A549 (cell line): ENCODE measurements at regions of chr11 and their contacts with region 1.

Region 1: DNA sequence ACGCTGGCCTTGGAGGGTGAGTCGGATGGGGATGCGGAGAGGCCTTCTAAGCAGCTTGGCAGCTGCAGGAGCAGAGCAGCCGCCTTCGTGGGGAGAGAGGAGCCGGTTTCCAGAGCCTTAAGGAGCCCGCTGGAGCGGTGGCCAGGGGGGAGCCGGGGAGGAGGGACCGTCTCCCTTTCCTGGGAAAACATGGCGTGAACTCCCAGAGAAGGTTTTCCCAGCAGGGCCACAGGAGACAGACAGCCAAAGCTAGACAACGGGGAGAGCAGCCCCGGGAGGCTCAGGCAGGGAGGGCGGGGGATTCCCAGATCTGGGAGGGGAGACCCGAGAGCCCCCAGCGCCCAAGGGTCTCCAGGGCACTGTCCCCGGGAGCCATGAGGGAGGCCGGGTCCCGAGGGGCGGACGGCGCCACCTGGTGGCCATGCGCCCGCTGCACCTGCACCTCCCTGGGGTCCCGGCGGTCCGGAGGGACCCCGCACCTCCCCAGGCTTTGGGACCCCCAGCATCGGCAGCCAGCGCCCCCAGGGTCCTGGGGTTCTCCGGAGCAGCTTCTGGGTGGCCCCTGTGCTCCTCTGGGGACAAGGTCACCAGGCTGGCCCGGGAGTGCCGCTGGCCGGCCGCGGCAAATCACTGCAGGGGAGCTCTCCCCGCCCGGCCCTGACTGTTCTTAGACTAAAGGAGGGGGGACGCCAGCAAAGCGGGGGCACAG is 2.4 kb upstream of the SYT8 start:
- DNase-seq: peak; percentile 44 to 69
- ATAC-seq: peak; percentile 41 to 83; a peak in 3 of 6 replicates
- H3K4me3 ChIP-seq: peak overlapping the region; percentile 27
- H3K27ac ChIP-seq: peak overlapping the region; percentile 73 to 89
- H3K4me1 ChIP-seq: peaks cover 66% of the 10 kb centered on the region
- CTCF ChIP-seq: peak; percentile 99
- EP300 ChIP-seq: no peak
- POLR2A ChIP-seq: no peak
- RAD21 ChIP-seq: peak; percentile 80 to 99

Region 2: GRCh38 chr11:1652771-1653540 is 179.4 kb before region 1 on chr11:
- CTCF ChIA-PET with region 1: interaction called, 108 read pairs
- POLR2A ChIA-PET with region 1: no interaction called
- DNase-seq: peak; percentile 51 to 89
- ATAC-seq: peak; percentile 79 to 93
- H3K4me3 ChIP-seq: no peak overlapping the region
- H3K27ac ChIP-seq: peak overlapping the region in 1 of 2 experiments; percentile 26; a peak in 2 of 6 replicates
- H3K4me1 ChIP-seq: no peaks in the 10 kb centered on the region; the same call in 2 of the 3 replicates
- CTCF ChIP-seq: peak; percentile 93
- EP300 ChIP-seq: no peak
- POLR2A ChIP-seq: no peak
- RAD21 ChIP-seq: peak; percentile 94 to 97

Region 3: DNA sequence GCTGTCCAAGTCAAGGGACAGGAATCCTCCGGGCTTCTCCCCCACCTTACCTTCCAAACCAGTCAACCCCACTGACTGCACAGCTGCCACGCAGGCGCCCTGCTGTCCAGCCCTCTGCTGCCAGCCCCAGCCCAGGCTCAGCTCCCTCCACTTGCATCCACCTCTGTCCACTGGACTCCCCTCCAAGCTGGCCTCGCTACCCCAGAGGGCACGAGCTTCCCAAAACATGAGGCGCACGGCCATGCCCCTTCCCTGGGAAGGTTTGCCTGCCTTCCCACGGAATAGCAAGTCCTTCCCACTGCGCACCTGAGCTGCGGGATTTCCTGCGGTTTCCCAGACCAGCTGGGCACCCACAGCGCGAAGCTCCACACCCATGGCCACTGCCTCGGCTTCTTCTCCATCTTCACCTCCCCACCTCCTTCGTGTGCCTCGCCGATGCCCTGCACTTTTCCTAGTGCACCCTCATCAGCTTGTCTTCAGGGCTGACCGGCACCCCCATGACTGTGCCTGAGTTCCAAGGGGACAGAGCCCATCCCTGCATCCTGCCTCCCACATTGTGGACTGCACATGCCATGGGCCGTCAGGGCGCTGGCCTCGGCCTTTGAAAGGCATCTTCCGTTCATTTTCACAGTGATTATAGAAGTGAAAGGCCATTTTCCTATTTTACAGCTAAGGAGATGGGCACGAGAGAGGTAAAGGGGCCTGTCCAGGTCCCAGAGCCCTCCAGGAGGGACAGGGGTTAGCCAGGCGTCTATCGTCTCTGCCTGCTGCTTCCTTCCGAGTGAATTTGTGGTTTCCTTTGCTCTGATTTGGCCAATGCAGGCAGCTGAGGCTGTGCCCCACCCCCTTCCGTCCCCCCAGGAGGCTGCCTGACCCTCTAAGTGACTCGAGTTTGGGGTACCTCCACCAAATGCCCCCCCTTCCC is 98.4 kb before region 1 on chr11:
- CTCF ChIA-PET with region 1: interaction called, 19 read pairs
- POLR2A ChIA-PET with region 1: no interaction called
- DNase-seq: no peak
- ATAC-seq: peak; percentile 14 to 18; a peak in 3 of 6 replicates
- H3K4me3 ChIP-seq: no peak overlapping the region
- H3K27ac ChIP-seq: no peak overlapping the region
- H3K4me1 ChIP-seq: no peaks in the 10 kb centered on the region
- CTCF ChIP-seq: no peak
- EP300 ChIP-seq: no peak
- POLR2A ChIP-seq: no peak
- RAD21 ChIP-seq: no peak

Region 4: DNA sequence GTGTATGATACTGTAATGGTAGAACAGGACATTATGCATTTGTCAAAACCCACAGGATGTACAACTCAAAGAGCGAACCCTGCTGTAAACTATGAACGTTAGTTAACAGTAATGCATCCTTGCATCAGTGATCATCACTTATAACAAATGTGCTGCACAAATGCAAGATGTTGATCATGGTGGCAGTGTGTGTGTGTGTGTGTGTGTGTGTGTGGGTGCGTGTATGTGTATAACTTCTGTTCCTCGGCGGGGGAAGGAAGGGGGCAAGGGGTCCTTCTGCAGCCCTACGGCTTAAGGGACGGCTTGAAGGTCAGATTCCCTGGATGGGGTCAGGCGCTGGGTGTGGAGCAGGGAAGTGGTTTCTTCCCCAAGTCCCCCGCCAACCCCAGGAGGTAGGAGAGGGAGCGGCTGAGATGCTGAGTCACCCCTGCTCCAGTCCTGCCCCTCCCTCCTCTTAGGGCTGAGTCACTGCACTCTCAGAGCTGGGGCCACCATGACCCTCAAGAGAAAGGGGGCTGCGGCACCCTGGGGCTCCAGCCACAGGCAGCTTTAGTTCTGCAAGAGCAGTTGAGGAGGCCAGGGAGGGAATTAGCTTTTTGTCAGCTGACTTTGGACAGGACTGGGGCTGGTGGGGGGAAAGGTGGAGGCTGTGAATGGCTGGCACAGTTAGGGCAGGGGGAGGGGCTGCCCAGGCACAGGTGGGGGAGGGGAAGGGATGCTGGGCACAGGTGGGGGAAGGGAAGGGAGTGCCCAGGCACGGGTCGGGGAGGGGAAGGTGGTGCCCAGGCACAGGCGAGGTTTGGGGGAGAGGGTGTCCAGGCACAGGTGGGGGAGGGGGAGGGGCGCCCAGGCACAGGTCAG is 59.9 kb before region 1 on chr11:
- CTCF ChIA-PET with region 1: interaction called, 18 read pairs
- POLR2A ChIA-PET with region 1: interaction called, 5 read pairs
- DNase-seq: peak; percentile 94 to 95
- ATAC-seq: peak; percentile 95 to 98
- H3K4me3 ChIP-seq: no peak overlapping the region
- H3K27ac ChIP-seq: peak overlapping the region; percentile 97 to 99
- H3K4me1 ChIP-seq: peaks cover 42% of the 10 kb centered on the region
- CTCF ChIP-seq: no peak
- EP300 ChIP-seq: peak in 1 of 2 experiments; percentile 54; a peak in 1 of 5 replicates
- POLR2A ChIP-seq: no peak
- RAD21 ChIP-seq: no peak

Region 5: GRCh38 chr11:1864831-1865665 is 32.7 kb after region 1 on chr11:
- CTCF ChIA-PET with region 1: interaction called, 32 read pairs
- POLR2A ChIA-PET with region 1: no interaction called
- DNase-seq: no peak
- ATAC-seq: peak in 1 of 2 experiments; percentile 15; a peak in 2 of 6 replicates
- H3K4me3 ChIP-seq: no peak overlapping the region
- H3K27ac ChIP-seq: peak overlapping the region; percentile 87 to 94
- H3K4me1 ChIP-seq: peaks cover 42% of the 10 kb centered on the region
- CTCF ChIP-seq: no peak
- EP300 ChIP-seq: no peak
- POLR2A ChIP-seq: no peak
- RAD21 ChIP-seq: no peak

Region 6: GRCh38 chr11:1896923-1897322 is 64.6 kb after region 1 on chr11:
- CTCF ChIA-PET with region 1: interaction called, 12 read pairs
- POLR2A ChIA-PET with region 1: no interaction called
- DNase-seq: no peak
- ATAC-seq: no peak
- H3K4me3 ChIP-seq: no peak overlapping the region
- H3K27ac ChIP-seq: no peak overlapping the region
- H3K4me1 ChIP-seq: no peaks in the 10 kb centered on the region
- CTCF ChIP-seq: no peak
- EP300 ChIP-seq: no peak
- POLR2A ChIP-seq: no peak
- RAD21 ChIP-seq: no peak

Region 7: GRCh38 chr11:2002807-2003206 is 170.4 kb after region 1 on chr11:
- CTCF ChIA-PET with region 1: interaction called, 50 read pairs
- POLR2A ChIA-PET with region 1: no interaction called
- DNase-seq: no peak
- ATAC-seq: peak; percentile 49 to 72; a peak in 4 of 6 replicates
- H3K4me3 ChIP-seq: no peak overlapping the region
- H3K27ac ChIP-seq: no peak overlapping the region
- H3K4me1 ChIP-seq: no peaks in the 10 kb centered on the region
- CTCF ChIP-seq: no peak
- EP300 ChIP-seq: no peak
- POLR2A ChIP-seq: no peak
- RAD21 ChIP-seq: no peak